Panc1 (cell line): ENCODE measurements at regions of chr19 and their contacts with region 1.

Region 1: DNA sequence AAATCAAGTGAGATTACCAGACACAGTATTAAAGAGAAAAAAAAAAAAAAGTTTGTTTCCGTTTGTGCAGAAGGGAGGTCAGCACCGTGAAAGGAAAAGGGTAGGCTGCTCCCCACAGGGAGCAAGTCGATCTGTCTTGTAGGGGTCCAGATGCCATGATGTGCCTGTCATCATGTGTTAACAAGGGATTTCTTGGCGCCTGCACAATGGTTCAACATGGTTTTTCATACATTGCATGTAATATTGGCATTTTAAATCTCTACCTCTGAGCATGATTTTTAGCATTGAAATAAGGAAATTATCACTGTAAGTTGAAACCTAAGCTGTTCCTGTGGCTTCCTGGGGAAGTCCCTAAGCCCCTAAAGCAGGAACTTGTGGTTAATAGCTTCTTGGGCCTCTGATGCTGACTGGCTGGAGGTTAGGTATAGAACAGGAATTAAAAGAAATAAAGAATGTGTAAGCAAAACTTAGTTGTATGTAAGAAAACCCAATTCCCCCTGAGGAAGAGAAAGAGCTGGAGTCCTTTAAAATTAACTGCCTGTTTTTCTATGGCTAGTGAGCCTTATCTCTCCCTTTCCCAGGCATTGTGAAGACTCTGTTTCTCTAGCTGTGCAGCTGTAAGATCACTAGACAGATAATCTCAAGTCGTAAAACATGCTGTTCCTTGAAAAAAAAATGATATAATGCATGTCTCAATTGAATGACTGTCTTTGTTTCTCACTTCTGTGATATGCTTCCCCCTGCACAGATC is 7.4 kb upstream of the FCGBP start:
- DNase-seq: no peak
- ATAC-seq: no peak
- H3K4me3 ChIP-seq: no peak overlapping the region
- H3K27ac ChIP-seq: no peak overlapping the region
- H3K4me1 ChIP-seq: peaks cover 8% of the 10 kb centered on the region
- H3K27me3 ChIP-seq: peaks cover 34% of the 10 kb centered on the region
- CTCF ChIP-seq: no peak

Region 2: DNA sequence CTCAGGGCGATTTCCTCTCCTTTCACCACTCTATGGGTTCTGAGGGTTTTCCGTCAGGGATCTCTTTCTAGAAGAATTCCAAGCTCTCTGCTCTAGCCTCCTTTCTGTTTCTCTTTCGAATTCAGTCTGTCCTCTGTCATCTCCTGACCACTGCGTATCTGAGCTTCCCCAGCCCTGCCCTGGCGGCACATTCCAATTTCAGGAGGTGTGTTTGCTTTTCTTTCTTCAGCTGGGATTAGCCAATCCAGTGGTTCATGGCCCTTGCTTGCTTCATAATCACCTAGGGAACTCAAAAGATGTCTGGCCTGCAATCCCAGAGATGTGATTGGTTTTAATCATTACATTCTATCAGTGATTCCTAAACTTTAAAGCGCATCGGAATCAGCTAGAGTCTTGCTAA is 664.2 kb before region 1 on chr19:
- CTCF ChIA-PET with region 1: no interaction called
- POLR2A ChIA-PET with region 1: no interaction called
- in situ Hi-C with region 1: loop called (anchors 10 kb)
- intact Hi-C with region 1: no loop called
- DNase-seq: no peak
- ATAC-seq: peak; percentile 27
- H3K4me3 ChIP-seq: no peak overlapping the region
- H3K27ac ChIP-seq: no peak overlapping the region
- H3K4me1 ChIP-seq: no peaks in the 10 kb centered on the region
- H3K27me3 ChIP-seq: peaks cover 8% of the 10 kb centered on the region; the same call in 1 of the 2 replicates
- CTCF ChIP-seq: no peak

Region 3: DNA sequence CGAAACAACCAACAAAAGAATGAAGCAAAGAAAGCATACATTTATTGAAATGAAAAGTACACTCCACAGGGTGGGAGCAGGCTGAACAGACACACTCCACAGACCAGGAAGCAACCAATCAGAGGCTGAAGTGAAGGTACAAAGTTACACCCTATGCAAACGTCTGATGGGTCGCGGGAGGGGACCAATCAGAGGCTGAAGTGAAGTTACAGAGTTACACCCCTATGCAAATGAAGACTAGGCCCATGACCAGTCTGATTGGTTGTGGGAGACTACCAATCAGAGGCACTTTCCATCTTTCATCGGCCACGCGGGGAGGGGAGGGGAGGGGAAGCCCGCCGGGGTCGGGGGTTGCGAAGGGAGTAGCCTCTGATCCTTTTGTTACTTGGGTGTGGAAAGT is 83.2 kb before region 1 on chr19:
- CTCF ChIA-PET with region 1: no interaction called
- POLR2A ChIA-PET with region 1: interaction called, 12 read pairs
- in situ Hi-C with region 1: no loop called
- intact Hi-C with region 1: no loop called
- DNase-seq: no peak
- ATAC-seq: peak; percentile 13; the same call in 1 of the 2 replicates
- H3K4me3 ChIP-seq: no peak overlapping the region
- H3K27ac ChIP-seq: no peak overlapping the region
- H3K4me1 ChIP-seq: peaks cover 4% of the 10 kb centered on the region
- H3K27me3 ChIP-seq: no peaks in the 10 kb centered on the region
- CTCF ChIP-seq: no peak

Region 4: DNA sequence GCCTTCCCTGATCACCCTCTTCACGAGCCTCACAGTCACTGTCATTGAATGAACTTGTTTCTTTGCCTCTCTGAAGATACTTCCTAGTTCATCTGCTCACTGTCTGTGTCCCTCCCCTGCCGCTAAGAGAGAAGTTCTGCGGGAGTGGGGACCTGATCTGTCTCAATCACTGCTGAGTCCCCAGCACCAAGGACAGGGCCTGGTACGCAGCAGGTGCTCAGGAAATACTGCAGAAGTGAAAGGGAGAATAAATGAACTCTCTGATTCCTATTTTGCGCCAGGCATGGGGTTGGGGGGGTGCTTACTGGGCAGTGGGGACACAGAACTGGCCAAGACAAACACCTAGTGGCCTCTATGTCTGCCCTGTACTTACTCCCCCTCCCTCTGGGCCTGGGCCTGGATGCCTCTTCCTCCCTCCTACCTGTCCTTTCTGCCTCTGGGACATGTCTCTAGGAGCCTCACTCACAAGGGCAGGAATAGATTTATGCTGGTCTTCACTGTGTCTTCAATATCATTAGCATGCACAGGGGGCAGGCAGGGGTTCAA is 24.9 kb before region 1 on chr19:
- CTCF ChIA-PET with region 1: interaction called, 6 read pairs
- POLR2A ChIA-PET with region 1: interaction called, 22 read pairs
- in situ Hi-C with region 1: no loop called
- intact Hi-C with region 1: no loop called
- DNase-seq: no peak
- ATAC-seq: peak; percentile 7; the same call in 1 of the 2 replicates
- H3K4me3 ChIP-seq: no peak overlapping the region
- H3K27ac ChIP-seq: no peak overlapping the region
- H3K4me1 ChIP-seq: no peaks in the 10 kb centered on the region
- H3K27me3 ChIP-seq: no peaks in the 10 kb centered on the region
- CTCF ChIP-seq: no peak

Region 5: GRCh38 chr19:39996811-39997594 is 55.2 kb after region 1 on chr19 and contains the start of gene ZNF546:
- CTCF ChIA-PET with region 1: no interaction called
- POLR2A ChIA-PET with region 1: no interaction called
- in situ Hi-C with region 1: loop called (anchors 5 kb)
- intact Hi-C with region 1: no loop called
- DNase-seq: peak; percentile 100
- ATAC-seq: peak; percentile 98
- H3K4me3 ChIP-seq: peak within 1 kb of the TSS; percentile 35 to 49
- H3K27ac ChIP-seq: peak within 1 kb of the TSS; percentile 83
- H3K4me1 ChIP-seq: peaks cover 19% of the 10 kb centered on the region
- H3K27me3 ChIP-seq: no peaks in the 10 kb centered on the region
- CTCF ChIP-seq: no peak
- total RNA-seq, gene ZNF546: 68.4 TPM

Region 6: GRCh38 chr19:40090241-40091204 is 148.7 kb after region 1 on chr19 and contains the start of gene ZNF780A:
- CTCF ChIA-PET with region 1: interaction called, 6 read pairs
- POLR2A ChIA-PET with region 1: no interaction called
- in situ Hi-C with region 1: loop called (anchors 5 kb)
- intact Hi-C with region 1: no loop called
- DNase-seq: peak; percentile 100
- ATAC-seq: peak; percentile 99
- H3K4me3 ChIP-seq: peak within 1 kb of the TSS; percentile 36 to 48
- H3K27ac ChIP-seq: peak within 1 kb of the TSS; percentile 83
- H3K4me1 ChIP-seq: peaks cover 15% of the 10 kb centered on the region
- H3K27me3 ChIP-seq: no peaks in the 10 kb centered on the region; the same call in 1 of the 2 replicates
- CTCF ChIP-seq: no peak
- total RNA-seq, gene ZNF780A: 251 TPM